GM12878 (cell line): ENCODE measurements at regions of chr11 and their contacts with region 1.

Region 1: GRCh38 chr11:58567889-58568512 is 7.7 kb downstream of the LPXN start:
- DNase-seq: no peak
- ATAC-seq: peak; percentile 89
- H3K4me3 ChIP-seq: 0 out of 2 replicates have a peak overlapping the region, but pooled peaks have one; percentile 16
- H3K27ac ChIP-seq: no peak overlapping the region
- H3K4me1 ChIP-seq: peaks cover 10% of the 10 kb centered on the region
- H3K27me3 ChIP-seq: no peaks in the 10 kb centered on the region
- CTCF ChIP-seq: peak; percentile 80 to 89 (median 85)
- EP300 ChIP-seq: no peak
- POLR2A ChIP-seq: no peak
- RAD21 ChIP-seq: peak; percentile 59

Region 2: DNA sequence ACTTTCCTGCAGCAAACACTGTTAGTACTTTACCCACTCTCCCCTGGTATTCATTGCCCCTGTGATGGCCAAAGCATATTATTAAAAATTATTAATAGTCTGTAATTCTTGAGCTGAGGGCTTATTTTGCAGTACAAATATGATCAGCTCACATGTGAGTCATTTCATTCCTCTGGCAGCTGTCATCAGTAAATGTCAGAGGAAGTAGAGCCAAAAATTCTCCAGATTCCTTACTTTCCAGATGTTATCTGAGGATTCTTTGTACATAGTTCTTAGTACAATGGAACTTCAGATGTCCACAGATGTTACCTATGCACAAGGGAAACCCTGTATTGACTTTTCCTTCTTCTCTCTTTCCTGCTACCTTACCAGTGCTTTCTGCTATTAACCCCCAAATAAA is 173.8 kb before region 1 on chr11:
- CTCF ChIA-PET with region 1: no interaction called
- POLR2A ChIA-PET with region 1: no interaction called
- RAD21 ChIA-PET with region 1: no interaction called
- SMC1A ChIA-PET with region 1: no interaction called
- in situ Hi-C with region 1: no loop called
- intact Hi-C with region 1: no loop called
- DNase-seq: no peak
- ATAC-seq: no peak
- H3K4me3 ChIP-seq: no peak overlapping the region
- H3K27ac ChIP-seq: no peak overlapping the region
- H3K4me1 ChIP-seq: no peaks in the 10 kb centered on the region
- H3K27me3 ChIP-seq: no peaks in the 10 kb centered on the region
- CTCF ChIP-seq: no peak
- EP300 ChIP-seq: no peak
- POLR2A ChIP-seq: no peak
- RAD21 ChIP-seq: no peak

Region 3: DNA sequence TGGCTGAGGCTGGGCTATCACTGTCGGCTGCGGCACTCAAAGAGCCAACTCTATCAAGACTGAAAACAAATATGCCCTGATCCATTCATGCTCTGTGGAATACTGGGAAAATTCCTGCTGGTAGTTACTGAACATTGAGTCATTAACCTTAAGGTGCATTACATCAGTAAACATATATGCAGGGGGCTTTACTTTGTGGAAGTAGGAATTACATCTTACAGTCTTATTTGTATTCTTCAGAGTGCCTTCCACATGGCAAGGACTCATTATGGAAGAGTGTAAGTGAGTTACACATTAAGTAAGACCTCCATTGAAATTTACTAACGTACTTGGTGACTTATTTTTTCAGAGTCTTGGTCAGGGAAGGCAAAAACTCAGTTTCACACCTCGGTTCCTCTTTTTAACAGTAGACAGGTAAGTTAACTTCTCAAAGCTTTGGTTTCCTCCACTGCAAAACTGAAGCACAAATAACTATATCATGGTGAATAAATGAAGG is 64.6 kb before region 1 on chr11:
- CTCF ChIA-PET with region 1: interaction called, 11 read pairs
- POLR2A ChIA-PET with region 1: no interaction called
- RAD21 ChIA-PET with region 1: no interaction called
- SMC1A ChIA-PET with region 1: interaction called, 13 read pairs
- in situ Hi-C with region 1: no loop called
- intact Hi-C with region 1: no loop called
- DNase-seq: peak; percentile 51
- ATAC-seq: peak; percentile 91
- H3K4me3 ChIP-seq: no peak overlapping the region
- H3K27ac ChIP-seq: no peak overlapping the region
- H3K4me1 ChIP-seq: peaks cover 6% of the 10 kb centered on the region; the same call in 1 of the 2 replicates
- H3K27me3 ChIP-seq: no peaks in the 10 kb centered on the region
- CTCF ChIP-seq: no peak
- EP300 ChIP-seq: peak in 1 of 2 experiments; percentile 84; a peak in 2 of 4 replicates
- POLR2A ChIP-seq: no peak
- RAD21 ChIP-seq: no peak

Region 4: GRCh38 chr11:58549644-58550043 is 18.4 kb before region 1 on chr11:
- CTCF ChIA-PET with region 1: interaction called, 34 read pairs
- POLR2A ChIA-PET with region 1: interaction called, 6 read pairs
- RAD21 ChIA-PET with region 1: no interaction called
- SMC1A ChIA-PET with region 1: interaction called, 9 read pairs
- in situ Hi-C with region 1: no loop called
- intact Hi-C with region 1: no loop called
- DNase-seq: no peak
- ATAC-seq: no peak
- H3K4me3 ChIP-seq: no peak overlapping the region
- H3K27ac ChIP-seq: no peak overlapping the region
- H3K4me1 ChIP-seq: no peaks in the 10 kb centered on the region
- H3K27me3 ChIP-seq: no peaks in the 10 kb centered on the region
- CTCF ChIP-seq: no peak
- EP300 ChIP-seq: no peak
- POLR2A ChIP-seq: no peak
- RAD21 ChIP-seq: no peak

Region 5: DNA sequence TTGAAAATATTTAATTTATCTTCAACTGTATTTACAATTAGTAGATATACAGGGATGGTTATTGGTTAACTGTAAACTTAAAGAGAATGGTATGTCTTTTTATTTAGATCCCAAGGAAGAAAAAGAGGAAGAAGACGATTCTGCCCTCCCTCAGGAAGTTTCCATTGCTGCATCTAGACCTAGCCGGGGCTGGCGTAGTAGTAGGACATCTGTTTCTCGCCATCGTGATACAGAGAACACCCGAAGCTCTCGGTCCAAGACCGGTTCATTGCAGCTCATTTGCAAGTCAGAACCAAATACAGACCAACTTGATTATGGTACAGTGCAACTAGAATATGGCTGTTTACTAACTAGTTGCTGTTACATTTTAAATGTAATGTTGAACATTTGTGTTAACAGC is 41.7 kb after region 1 on chr11:
- CTCF ChIA-PET with region 1: interaction called, 29 read pairs
- POLR2A ChIA-PET with region 1: interaction called, 4 read pairs
- RAD21 ChIA-PET with region 1: interaction called, 5 read pairs
- SMC1A ChIA-PET with region 1: interaction called, 6 read pairs
- in situ Hi-C with region 1: no loop called
- intact Hi-C with region 1: no loop called
- DNase-seq: no peak
- ATAC-seq: peak; percentile 40
- H3K4me3 ChIP-seq: no peak overlapping the region
- H3K27ac ChIP-seq: no peak overlapping the region
- H3K4me1 ChIP-seq: peaks cover 9% of the 10 kb centered on the region
- H3K27me3 ChIP-seq: no peaks in the 10 kb centered on the region
- CTCF ChIP-seq: no peak
- EP300 ChIP-seq: no peak
- POLR2A ChIP-seq: no peak
- RAD21 ChIP-seq: no peak

Region 6: DNA sequence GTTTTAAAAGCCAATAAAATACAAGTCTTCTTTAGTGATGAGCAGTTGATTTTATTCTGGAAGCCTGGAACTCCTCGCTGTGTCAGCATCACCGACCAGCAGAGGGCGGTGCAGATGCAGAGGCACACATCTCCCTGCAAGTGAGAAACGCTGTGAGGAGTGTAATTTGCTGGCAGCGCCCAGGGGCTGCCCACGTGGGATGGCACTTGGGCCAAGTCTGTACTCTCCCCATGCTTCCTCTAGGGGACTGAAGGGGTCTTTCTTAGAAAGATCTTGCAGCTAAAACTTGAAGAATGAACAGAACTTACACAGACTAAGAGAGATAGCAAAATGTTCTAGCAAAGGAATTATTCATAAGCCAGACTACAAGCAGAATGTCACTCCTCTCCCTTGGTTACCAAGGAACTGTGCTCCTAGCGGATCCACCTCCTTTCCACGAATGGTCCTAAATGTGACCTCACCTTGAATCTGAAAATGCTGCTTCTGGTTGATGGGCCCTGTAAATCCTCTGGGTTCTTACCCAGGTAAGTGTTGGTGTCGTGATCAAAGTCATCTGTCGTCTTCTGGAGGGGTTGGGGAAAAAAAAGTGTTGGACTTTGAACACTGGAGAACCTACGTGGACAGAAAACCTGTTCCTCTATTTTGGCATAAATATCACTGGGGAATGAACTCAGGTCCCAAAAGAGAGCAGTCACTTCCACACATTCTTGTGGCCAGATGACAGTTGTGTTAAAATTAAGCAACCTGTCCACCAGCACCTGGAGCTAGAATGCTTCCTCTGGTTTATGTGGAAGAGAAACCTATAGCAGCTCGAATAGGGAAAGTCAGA is 86.3 kb after region 1 on chr11:
- CTCF ChIA-PET with region 1: interaction called, 13 read pairs
- POLR2A ChIA-PET with region 1: no interaction called
- RAD21 ChIA-PET with region 1: no interaction called
- SMC1A ChIA-PET with region 1: interaction called, 3 read pairs
- in situ Hi-C with region 1: no loop called
- intact Hi-C with region 1: no loop called
- DNase-seq: peak; percentile 38
- ATAC-seq: peak; percentile 98
- H3K4me3 ChIP-seq: no peak overlapping the region
- H3K27ac ChIP-seq: no peak overlapping the region
- H3K4me1 ChIP-seq: peaks cover 4% of the 10 kb centered on the region; the same call in 1 of the 2 replicates
- H3K27me3 ChIP-seq: no peaks in the 10 kb centered on the region
- CTCF ChIP-seq: peak; percentile 89 to 90 (median 89)
- EP300 ChIP-seq: no peak
- POLR2A ChIP-seq: no peak
- RAD21 ChIP-seq: peak; percentile 76